HepG2 (cell line): ENCODE measurements at regions of chr2 and their contacts with region 1.

Region 1: DNA sequence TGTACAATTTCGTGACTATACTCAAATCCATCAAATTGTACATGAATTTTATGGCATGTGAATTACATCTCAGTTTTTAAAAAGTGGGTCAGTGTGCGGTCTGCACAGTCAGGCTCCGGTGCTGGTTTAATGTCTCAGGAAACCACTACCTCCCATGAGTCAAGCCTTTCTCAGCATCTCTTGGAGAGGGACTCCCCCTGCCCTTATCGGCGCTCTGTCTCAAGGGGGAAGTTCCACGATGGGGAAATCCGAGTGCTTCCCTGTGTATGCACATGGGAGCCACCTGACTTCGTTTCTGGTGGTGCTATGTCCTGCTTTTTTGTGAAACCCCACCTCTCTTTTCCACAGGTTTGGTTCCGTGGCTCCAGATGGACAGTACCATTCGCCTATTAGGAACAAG is 72.5 kb downstream of the ACOXL start:
- DNase-seq: no peak
- ATAC-seq: no peak
- H3K4me3 ChIP-seq: no peak overlapping the region
- H3K27ac ChIP-seq: no peak overlapping the region
- H3K4me1 ChIP-seq: no peaks in the 10 kb centered on the region
- H3K27me3 ChIP-seq: peaks cover 10 to 58% of the 10 kb centered on the region in 2 experiments; a peak in 4 of 5 replicates
- CTCF ChIP-seq: no peak
- EP300 ChIP-seq: no peak
- POLR2A ChIP-seq: no peak
- RAD21 ChIP-seq: no peak

Region 2: DNA sequence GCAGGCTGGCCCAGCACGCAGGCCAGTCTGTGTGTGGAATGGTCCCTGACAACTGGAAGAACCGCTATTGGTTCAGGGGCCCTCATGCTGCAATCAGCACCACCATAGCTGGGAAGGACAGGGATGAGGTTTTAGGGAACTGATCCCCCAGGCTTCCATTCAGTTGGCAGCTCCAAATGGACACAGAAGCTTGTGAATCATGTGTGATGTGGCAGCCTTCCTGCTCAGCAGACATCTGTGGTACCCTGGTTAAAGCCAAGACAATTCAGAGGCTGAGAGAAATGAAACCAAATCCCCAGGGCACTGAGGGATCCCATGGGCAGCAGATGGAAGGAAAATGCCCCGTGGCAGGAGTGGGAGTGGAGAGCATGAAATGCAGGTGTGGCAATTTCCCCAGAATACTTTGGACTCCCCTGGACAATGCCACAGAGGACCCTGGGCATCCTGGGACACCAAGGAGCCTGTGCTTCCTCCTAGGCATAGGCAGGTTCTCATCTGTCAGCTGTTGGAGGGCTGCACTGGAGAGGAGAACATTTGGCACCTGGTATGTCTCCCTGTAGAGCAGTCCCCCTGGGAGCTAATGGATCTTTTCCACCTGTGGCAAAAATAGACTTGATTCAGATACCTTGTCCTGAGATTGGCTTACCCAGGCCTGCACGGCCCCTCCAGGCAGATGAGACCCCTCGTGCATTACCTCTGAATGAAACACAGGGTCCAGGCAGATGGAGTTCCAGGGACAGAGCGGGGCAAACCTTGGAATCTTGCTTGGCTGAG is 153.6 kb after region 1 on chr2:
- CTCF ChIA-PET with region 1: no interaction called
- POLR2A ChIA-PET with region 1: no interaction called
- in situ Hi-C with region 1: no loop called
- intact Hi-C with region 1: no loop called
- DNase-seq: no peak
- ATAC-seq: no peak; the same call in 1 of the 3 replicates
- H3K4me3 ChIP-seq: no peak overlapping the region
- H3K27ac ChIP-seq: no peak overlapping the region
- H3K4me1 ChIP-seq: no peaks in the 10 kb centered on the region
- H3K27me3 ChIP-seq: peaks cover 2 to 38% of the 10 kb centered on the region in 2 experiments; a peak in 3 of 5 replicates
- CTCF ChIP-seq: no peak
- EP300 ChIP-seq: no peak
- POLR2A ChIP-seq: no peak
- RAD21 ChIP-seq: no peak

Region 3: DNA sequence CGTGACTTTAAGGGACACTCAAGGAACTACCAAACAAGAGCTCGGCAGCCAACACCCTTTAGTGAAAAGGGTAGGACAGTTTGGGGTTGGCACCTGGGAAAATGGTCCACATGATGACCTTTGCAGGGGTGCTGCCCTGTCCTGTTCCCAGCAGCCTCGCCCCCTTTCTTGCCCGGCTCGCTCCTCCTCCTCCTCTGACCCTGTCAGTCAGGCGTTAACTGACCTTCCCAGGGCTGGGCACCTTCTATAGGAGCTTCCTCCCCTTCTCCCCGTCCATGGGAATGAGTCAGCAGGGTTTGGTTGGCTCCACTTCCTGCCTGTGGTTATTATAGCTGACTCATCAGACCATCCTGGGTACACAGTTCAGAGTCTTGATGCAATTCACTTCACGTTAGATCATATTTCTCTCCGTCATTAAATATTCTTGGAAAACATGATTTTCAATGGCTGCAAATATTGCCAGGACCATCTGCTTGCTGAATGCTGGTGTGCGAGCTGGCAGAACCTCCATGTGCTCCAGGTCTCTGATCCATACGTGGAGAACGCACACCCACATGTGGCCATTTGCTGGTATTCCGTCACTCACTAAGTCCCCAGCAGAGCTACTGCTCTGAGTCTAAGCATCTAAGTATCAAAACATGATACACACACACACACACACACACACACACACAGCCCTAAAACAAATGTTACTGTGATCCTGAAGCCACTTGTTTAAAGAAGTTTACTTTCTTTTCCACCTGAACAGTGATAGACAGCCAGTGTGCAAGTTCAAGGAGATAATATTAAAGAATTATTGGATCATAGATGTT is 894.0 kb after region 1 on chr2:
- CTCF ChIA-PET with region 1: no interaction called
- POLR2A ChIA-PET with region 1: no interaction called
- in situ Hi-C with region 1: loop called (anchors 25 kb)
- intact Hi-C with region 1: no loop called
- DNase-seq: peak; percentile 94
- ATAC-seq: peak; percentile 91
- H3K4me3 ChIP-seq: peak overlapping the region; percentile 38 to 62 (median 43); a peak in 5 of 6 replicates
- H3K27ac ChIP-seq: peak overlapping the region; percentile 37
- H3K4me1 ChIP-seq: peaks cover 41% of the 10 kb centered on the region
- H3K27me3 ChIP-seq: no peaks in the 10 kb centered on the region
- CTCF ChIP-seq: peak; percentile 95
- EP300 ChIP-seq: peak; percentile 12 to 74; a peak in 2 of 4 replicates
- POLR2A ChIP-seq: peak; percentile 26 to 44; a peak in 1 of 4 replicates
- RAD21 ChIP-seq: peak; percentile 91